CD4-positive, alpha-beta T cell (primary cell): ENCODE measurements at regions of chrX and their contacts with region 1.

Region 1: GRCh38 chrX:56978172-56978571 is 17.2 kb downstream of the SPIN3 start:
- DNase-seq: peak in 12 of 14 experiments; percentile 2 to 71 (median 30)
- ATAC-seq: peak; percentile 89
- H3K4me3 ChIP-seq: no peak overlapping the region
- H3K4me3 Mint-ChIP-seq: no peak overlapping the region
- H3K27ac ChIP-seq: no peak overlapping the region
- H3K27ac Mint-ChIP-seq: peak overlapping the region; percentile 8
- H3K4me1 ChIP-seq: no peaks in the 10 kb centered on the region
- H3K4me1 Mint-ChIP-seq: peaks cover 5% of the 10 kb centered on the region
- H3K27me3 ChIP-seq: no peaks in the 10 kb centered on the region
- H3K27me3 Mint-ChIP-seq: no peaks in the 10 kb centered on the region
- CTCF ChIP-seq: peak; percentile 52

Region 2: DNA sequence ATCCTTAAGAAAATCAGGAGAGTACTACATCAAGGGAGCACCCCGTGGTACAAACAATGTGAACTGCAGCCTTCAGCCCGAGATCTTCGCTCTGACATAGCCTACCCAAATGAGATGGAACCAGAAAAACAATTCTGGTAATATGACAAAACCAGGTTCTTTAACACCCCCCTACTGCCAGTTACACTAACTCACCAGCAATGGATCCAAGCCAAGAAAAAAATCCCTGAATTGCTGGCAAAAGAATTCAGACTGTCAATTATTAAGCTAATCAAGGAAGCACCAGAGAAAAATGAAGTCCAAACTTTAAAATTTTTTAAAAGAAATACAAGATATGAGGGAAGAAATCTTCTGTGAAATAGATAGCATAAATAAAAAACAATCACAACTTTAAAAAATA is 847.7 kb before region 1 on chrX:
- CTCF ChIA-PET with region 1: no interaction called
- POLR2A ChIA-PET with region 1: no interaction called
- intact Hi-C with region 1: no loop called
- DNase-seq: no peak
- ATAC-seq: no peak
- H3K4me3 ChIP-seq: no peak overlapping the region
- H3K4me3 Mint-ChIP-seq: no peak overlapping the region
- H3K27ac ChIP-seq: no peak overlapping the region
- H3K27ac Mint-ChIP-seq: no peak overlapping the region
- H3K4me1 ChIP-seq: no peaks in the 10 kb centered on the region
- H3K4me1 Mint-ChIP-seq: no peaks in the 10 kb centered on the region
- H3K27me3 ChIP-seq: no peaks in the 10 kb centered on the region
- H3K27me3 Mint-ChIP-seq: no peaks in the 10 kb centered on the region
- CTCF ChIP-seq: no peak

Region 3: DNA sequence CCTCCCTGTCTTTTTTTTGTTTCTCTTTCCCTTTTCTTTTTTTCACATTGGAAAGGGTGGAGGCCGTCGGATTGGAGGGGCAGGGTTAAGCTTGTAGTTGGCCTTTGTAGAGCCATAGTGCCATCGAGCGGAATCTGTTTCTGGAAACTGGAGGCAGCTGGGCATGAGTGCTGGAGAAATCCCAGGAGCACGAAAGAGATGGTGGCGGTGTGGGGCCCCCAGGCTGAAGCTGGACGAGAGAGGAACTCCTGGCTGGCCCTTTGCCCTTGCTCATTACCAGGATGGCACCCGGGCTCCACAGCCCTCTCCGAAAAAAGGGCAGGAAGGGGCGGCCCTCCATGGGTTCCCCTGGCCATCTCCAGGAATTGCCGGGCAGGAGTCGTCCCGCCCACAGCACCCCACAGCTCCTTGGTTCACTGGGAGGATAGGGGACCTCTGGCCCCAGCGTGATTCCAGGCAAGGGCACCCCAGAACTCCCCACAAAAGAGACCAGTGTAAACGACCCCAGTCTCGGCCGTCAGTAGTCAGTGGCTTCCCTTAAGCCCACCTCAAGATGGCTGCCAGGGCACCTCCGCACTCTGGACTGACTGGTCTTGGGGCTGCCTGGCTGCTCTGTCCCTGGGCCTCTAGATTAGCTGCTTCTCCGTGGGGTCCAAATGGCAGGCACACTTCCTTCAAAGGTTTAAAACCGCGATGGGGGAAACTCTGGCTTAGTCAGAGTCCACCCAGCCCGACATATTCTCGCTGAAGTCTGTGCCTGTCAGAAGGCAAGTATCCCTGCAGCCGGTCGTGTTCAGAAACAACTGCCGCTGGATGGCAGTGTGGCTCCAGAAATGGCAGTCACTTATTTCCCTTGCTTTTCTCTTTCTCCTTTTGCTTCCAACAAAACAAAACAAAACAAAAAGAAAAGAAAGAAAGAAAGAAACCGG is 175.0 kb before region 1 on chrX:
- CTCF ChIA-PET with region 1: interaction called, 7 read pairs
- POLR2A ChIA-PET with region 1: interaction called, 4 read pairs
- intact Hi-C with region 1: loop called (anchors 1 to 2 kb)
- DNase-seq: peak; percentile 43 to 87 (median 63)
- ATAC-seq: no peak
- H3K4me3 ChIP-seq: no peak overlapping the region
- H3K4me3 Mint-ChIP-seq: peak overlapping the region; percentile 25
- H3K27ac ChIP-seq: no peak overlapping the region
- H3K27ac Mint-ChIP-seq: peak overlapping the region; percentile 78
- H3K4me1 ChIP-seq: peaks cover 50% of the 10 kb centered on the region
- H3K4me1 Mint-ChIP-seq: peaks cover 40% of the 10 kb centered on the region
- H3K27me3 ChIP-seq: no peaks in the 10 kb centered on the region
- H3K27me3 Mint-ChIP-seq: no peaks in the 10 kb centered on the region
- CTCF ChIP-seq: peak; percentile 16

Region 4: DNA sequence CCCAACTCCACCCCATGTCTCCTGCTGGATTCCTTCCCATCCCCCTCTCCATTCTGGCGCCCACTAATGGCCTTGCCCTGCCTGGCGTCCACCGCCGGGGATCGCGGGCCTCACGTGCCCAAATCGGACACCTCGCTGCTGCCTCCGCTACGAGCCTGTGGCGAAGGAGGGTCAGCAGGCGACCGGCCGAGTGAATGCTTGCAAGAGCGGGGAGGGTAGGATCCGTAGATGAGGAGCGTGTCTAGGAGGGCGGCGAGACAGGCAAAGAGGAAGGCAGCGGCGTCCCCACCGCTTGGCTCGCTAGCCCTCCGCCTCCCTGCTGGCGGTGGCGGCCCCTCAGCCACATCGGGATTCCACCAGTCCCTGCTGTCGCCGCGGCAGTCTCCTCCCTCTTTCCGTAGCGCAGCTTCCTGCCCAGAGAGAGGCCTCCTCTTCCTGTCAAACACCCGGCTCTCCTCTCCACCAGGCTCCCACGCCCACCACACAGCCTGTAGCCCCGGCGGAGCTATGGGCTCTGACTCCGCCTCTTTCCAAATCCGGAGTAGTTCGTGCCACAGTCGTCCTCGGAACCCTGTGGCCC is 143.1 kb after region 1 on chrX and contains the start of gene SPIN2B:
- CTCF ChIA-PET with region 1: no interaction called
- POLR2A ChIA-PET with region 1: no interaction called
- intact Hi-C with region 1: loop called in 1 of 2 experiments (anchors 5 kb)
- DNase-seq: peak; percentile 35 to 85 (median 66)
- ATAC-seq: peak; percentile 99
- H3K4me3 ChIP-seq: peak within 1 kb of the TSS; percentile 73
- H3K4me3 Mint-ChIP-seq: peak within 1 kb of the TSS; percentile 99
- H3K27ac ChIP-seq: peak within 1 kb of the TSS; percentile 2 to 40
- H3K27ac Mint-ChIP-seq: peak within 1 kb of the TSS; percentile 92
- H3K4me1 ChIP-seq: no peaks in the 10 kb centered on the region
- H3K4me1 Mint-ChIP-seq: peaks cover 14% of the 10 kb centered on the region
- H3K27me3 ChIP-seq: no peaks in the 10 kb centered on the region
- H3K27me3 Mint-ChIP-seq: no peaks in the 10 kb centered on the region
- CTCF ChIP-seq: no peak
- total RNA-seq, gene SPIN2B: 7.9 to 8.7 TPM

Region 5: GRCh38 chrX:57353472-57354132 is 375.4 kb after region 1 on chrX:
- CTCF ChIA-PET with region 1: no interaction called
- POLR2A ChIA-PET with region 1: no interaction called
- intact Hi-C with region 1: no loop called
- DNase-seq: no peak
- ATAC-seq: no peak
- H3K4me3 ChIP-seq: no peak overlapping the region
- H3K4me3 Mint-ChIP-seq: no peak overlapping the region
- H3K27ac ChIP-seq: no peak overlapping the region
- H3K27ac Mint-ChIP-seq: no peak overlapping the region
- H3K4me1 ChIP-seq: no peaks in the 10 kb centered on the region
- H3K4me1 Mint-ChIP-seq: no peaks in the 10 kb centered on the region
- H3K27me3 ChIP-seq: no peaks in the 10 kb centered on the region
- H3K27me3 Mint-ChIP-seq: no peaks in the 10 kb centered on the region
- CTCF ChIP-seq: no peak